ENCODE measurements at regions of chr1 and their contacts with region 1.

Region 1: DNA sequence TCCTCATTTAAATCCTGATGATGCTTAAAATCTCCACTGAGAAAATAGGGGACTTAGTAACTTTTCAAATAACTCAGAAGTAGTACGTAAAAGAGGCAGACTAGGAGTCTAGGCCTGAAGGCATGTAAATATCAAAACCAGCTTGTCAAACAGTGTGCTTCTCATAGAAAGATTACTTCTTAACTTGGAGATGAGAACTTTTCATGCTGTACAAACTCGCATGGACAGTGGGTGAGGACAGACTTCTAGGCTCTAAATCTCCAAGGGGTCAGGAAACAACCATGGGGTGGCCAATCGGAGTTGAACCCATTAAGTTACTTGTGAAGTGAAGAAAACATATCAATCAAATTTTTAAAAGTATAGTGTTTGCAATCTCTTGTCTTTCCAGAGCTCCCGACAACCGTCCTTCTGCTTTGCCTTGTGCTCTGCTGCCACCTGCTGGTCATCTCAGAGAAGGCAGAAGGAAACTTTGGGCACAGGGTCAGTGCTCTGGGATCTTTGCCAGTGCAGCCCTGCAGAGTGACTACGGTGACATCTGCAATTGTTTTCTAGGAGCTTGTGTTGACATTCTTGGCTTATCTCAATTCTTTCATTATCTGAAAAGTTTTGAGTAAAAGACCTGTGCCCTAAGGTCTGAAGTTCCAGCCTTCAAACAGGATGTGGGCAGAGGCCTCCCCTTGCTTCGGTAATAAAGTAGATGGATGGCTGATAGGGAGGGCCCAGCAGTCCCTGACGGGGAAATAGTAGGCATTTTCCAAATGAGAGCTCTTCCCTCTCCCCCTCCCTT is 105.1 kb upstream of the PDE4B start:
- DNase-seq: peak; percentile 60 to 75
- ATAC-seq: peak; percentile 89 to 90
- H3K4me3 ChIP-seq: no peak overlapping the region
- H3K27ac ChIP-seq: no peak overlapping the region
- H3K4me1 ChIP-seq: peaks cover 17 to 22% of the 10 kb centered on the region in 2 donors
- H3K27me3 ChIP-seq: no peaks in the 10 kb centered on the region
- CTCF ChIP-seq: peak; percentile 91 to 96 (median 93)
- POLR2A ChIP-seq: no peak

Region 2: GRCh38 chr1:64686828-64687724 is 1000.5 kb before region 1 on chr1:
- in situ Hi-C with region 1: no loop called
- intact Hi-C with region 1: loop called (anchors 5 kb)
- DNase-seq: no peak
- ATAC-seq: peak; percentile 52 to 60
- H3K4me3 ChIP-seq: no peak overlapping the region
- H3K27ac ChIP-seq: no peak overlapping the region
- H3K4me1 ChIP-seq: no peaks in the 10 kb centered on the region
- H3K27me3 ChIP-seq: no peaks in the 10 kb centered on the region
- CTCF ChIP-seq: peak; percentile 64 to 84 (median 69)
- POLR2A ChIP-seq: no peak

Region 3: DNA sequence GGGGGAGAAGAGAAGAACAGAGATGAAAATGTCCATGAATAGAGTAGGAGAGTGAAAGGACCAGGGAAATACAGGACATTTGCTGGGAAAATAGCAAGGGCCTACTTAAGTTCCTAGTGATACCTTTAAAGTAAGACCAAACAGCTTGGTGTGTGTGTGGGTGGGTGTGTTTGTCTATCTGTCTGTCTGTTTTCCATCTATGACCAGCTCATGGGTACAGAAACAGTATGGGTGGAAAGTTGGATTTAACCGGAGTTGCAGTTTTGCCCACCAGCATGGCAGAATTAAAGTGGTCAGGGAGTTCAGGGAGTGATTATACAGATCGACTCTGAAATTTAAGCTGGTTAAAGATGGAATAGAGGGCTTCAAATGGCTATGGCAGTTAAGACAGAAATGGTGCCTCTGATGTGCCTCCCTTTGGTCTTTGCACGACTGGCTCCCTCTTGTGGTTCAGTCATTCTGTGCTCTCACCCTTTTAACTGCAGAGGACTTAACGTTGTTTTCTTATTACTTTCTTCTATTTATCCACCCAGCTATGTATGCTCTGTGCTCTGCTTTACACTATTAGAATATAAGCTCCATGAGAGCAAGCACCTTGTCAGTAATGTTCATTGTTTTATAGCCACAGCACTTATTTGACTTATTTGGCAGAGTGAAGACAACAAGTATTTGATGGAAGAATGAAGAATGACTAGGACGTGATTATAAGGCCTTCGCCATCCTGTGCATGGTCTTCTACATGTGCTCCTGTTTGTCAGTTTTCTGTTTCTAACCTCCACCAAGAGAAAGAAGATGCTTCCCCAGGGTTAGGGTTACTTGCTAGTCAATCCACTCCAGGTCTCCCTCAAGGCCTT is 612.3 kb before region 1 on chr1:
- in situ Hi-C with region 1: loop called in 1 of 4 experiments (anchors 25 kb)
- intact Hi-C with region 1: no loop called
- DNase-seq: peak; percentile 32 to 49
- ATAC-seq: peak; percentile 89 to 95
- H3K4me3 ChIP-seq: no peak overlapping the region
- H3K27ac ChIP-seq: no peak overlapping the region
- H3K4me1 ChIP-seq: no peaks in the 10 kb centered on the region
- H3K27me3 ChIP-seq: no peaks in the 10 kb centered on the region
- CTCF ChIP-seq: peak; percentile 70 to 84 (median 76)
- POLR2A ChIP-seq: no peak

Region 4: DNA sequence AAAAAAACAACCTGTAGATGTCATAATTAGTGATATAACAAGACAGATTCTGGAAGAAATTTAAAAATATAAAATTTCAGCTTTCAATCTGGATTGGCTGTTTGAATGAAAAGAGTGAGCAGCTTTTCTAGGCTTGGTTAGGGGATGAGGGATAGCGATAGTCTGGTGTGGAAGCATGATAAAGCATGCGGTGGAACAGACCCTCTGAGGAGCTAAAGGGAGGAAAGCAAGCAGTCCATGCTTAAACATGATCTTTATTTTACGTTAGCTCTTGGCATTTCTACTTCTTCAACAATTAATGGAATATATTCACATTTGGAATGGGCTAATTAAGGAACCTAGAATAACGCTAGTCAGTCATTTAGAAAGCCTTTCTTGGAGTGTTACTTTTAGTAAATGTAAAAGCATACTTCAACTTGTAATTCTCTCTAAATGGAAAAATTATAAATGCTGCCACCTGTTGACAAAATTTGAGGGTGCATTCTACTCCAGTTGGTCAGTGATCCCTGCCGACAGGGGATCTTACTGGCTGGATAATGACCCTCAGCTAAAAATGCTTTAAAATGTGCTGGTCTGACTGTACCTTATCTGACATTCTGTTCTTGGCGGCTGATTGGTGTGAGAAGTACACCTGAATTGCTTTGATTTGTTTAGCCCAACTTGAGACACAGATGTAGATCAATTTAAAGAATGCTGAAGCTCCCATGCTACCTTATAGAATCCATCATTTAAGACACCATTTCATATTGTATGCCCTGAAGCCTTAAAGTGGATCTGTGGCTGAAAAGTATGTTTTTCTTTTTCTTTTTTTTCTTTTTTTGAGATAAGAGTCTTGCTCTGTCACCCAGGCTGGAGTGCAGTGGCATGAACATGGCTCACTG is 478.4 kb before region 1 on chr1:
- in situ Hi-C with region 1: loop called in 2 of 4 experiments (anchors 25 kb)
- intact Hi-C with region 1: no loop called
- DNase-seq: peak in 1 of 2 donors; percentile 6
- ATAC-seq: peak; percentile 14 to 52
- H3K4me3 ChIP-seq: no peak overlapping the region
- H3K27ac ChIP-seq: no peak overlapping the region
- H3K4me1 ChIP-seq: no peaks in the 10 kb centered on the region
- H3K27me3 ChIP-seq: no peaks in the 10 kb centered on the region
- CTCF ChIP-seq: peak in 3 of 5 experiments; percentile 22 to 65 (median 53)
- POLR2A ChIP-seq: no peak

Region 5: DNA sequence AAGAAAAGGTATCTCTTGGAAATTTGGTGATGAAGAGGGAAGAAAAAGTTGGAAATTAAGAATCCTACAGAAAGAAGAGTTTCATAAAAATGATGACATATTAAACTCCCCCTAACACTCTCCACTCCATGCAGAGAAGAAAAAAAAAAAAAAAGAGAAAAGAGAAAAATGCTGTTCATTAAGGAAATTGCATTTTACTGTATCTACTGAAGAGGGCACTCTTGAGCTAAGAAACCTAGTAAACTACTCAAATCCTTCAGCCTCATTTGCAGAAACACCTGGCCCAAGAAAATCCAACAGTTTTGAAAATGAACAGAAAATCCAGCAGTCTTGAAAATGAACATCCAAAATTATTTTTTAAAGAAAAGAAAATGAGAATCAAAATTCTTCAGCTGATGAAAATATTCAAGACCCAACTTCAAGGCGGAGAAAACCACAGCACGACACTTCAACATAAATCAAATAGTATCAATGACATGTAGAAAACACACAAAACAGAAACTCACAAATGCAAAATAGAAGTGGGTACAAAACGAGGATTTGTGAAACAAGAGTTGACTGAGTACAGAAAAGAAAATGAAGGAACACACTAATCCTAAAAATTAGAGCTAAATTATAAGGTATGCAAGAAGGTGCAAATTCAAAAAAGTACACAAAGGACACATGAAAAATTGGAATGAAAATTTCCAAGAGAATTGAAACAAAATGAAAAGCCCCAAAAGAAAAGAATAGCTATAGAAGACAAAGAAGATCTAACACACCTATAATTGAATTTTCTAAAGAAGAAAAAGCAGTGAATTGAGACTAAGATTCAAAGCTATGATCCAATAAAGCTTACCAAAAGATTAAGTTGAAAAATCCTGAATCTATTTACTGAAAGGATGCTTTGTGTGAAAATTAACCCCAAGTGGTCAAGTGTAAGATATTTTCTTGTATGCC is 451.5 kb before region 1 on chr1:
- in situ Hi-C with region 1: loop called in 2 of 4 experiments (anchors 10 kb)
- intact Hi-C with region 1: loop called (anchors 5 kb)
- DNase-seq: no peak
- ATAC-seq: no peak
- H3K4me3 ChIP-seq: no peak overlapping the region
- H3K27ac ChIP-seq: no peak overlapping the region
- H3K4me1 ChIP-seq: no peaks in the 10 kb centered on the region
- H3K27me3 ChIP-seq: no peaks in the 10 kb centered on the region
- CTCF ChIP-seq: peak in 2 of 5 experiments; percentile 26 to 45
- POLR2A ChIP-seq: no peak

Region 6: GRCh38 chr1:65431111-65431705 is 256.4 kb before region 1 on chr1:
- in situ Hi-C with region 1: loop called in 2 of 4 experiments (anchors 10 to 25 kb)
- intact Hi-C with region 1: loop called (anchors 1 kb)
- DNase-seq: no peak
- ATAC-seq: no peak
- H3K4me3 ChIP-seq: no peak overlapping the region
- H3K27ac ChIP-seq: peak overlapping the region in 2 of 4 donors; percentile 39 to 64
- H3K4me1 ChIP-seq: no peaks in the 10 kb centered on the region
- H3K27me3 ChIP-seq: no peaks in the 10 kb centered on the region
- CTCF ChIP-seq: peak in 4 of 5 experiments; percentile 23 to 60 (median 47)
- POLR2A ChIP-seq: no peak

Measured in gastrocnemius medialis (tissue), 4 donors.